ENCODE measurements at regions of chr1 and their contacts with region 1.

Region 1: DNA sequence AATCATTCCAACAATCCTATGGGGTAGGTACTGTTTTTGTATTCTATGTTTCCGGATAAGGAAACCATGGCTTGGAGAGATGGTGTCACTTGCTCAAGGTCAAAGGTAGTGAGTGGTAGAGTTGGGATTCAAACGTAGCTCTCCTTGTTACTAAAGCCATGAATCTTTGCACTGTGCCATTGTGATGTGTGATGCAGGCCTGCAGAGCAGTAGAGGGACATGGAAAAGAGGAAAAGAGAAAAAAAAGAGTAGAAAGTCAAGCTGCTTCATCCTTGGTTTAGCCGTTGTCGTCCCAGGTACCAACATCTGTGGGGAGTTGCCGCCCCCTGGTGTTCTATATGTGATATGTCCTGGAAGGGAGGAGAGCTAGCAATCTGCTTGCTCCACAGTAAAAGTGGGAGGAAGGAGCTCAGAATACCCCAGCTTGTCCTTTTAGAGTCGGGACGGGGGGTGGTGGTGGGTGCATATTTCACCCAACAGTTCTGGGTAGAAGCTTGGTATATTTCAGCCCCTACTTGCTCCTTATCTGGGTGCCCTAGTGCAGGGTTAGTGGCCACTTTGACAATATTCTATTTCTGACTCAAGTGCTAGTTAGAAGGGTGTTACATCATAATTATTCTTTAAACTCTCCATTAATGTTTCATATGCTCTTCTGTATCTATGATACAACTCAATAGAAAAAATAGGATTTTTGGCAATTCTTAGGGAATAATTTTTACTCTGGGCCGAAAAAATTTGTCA is 98.4 kb downstream of the EBNA1BP2 start:
- DNase-seq: peak; percentile 81
- H3K4me3 ChIP-seq: no peak overlapping the region; a peak in 1 of 4 replicates
- H3K27ac ChIP-seq: no peak overlapping the region
- H3K4me1 ChIP-seq: peaks cover 0 to 10% of the 10 kb centered on the region in 2 experiments; a peak in 1 of 4 replicates
- H3K27me3 ChIP-seq: no peaks in the 10 kb centered on the region
- CTCF ChIP-seq: peak; percentile 82
- EP300 ChIP-seq: no peak
- RAD21 ChIP-seq: peak; percentile 99

Region 2: DNA sequence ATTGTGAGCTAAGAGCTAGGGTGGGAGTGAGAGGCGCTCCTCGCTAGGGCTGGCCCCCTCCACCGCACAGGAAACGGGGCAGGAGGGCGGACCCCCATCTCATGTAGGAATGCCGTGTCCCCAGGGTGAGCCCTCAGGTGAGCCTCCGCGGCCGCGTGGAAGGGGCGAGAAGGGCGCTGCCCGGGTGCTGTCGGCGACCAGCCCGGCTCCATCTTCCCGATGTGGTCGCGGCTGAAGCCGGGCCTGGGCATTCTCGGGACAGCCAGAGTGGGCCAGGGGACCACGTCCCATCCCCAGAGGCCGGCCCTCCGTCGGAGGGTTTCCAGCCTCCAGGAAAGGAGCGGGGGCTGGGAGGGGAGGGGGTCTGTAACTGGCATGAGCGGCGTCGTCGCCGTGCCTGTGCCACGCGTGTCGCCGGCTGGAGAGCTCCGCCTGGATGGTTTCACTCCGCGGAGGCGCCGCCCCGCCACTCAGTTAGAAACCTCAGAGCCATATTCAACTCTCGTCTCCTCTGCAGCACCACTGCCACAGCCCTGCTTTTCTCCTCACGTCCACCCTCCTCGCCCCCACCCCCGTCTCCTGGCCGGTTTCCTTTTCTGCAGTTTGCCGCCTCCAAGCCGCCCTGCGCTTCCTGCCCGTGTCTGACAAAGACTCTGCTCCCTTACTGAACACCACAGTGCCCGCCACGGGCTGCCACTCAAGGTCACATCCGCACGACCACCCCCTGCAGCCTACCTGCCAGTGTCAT is 288.5 kb before region 1 on chr1 and contains the start of gene TMEM269:
- CTCF ChIA-PET with region 1: interaction called, 118 read pairs
- POLR2A ChIA-PET with region 1: no interaction called
- DNase-seq: peak; percentile 27
- H3K4me3 ChIP-seq: no peak within 1 kb of the TSS
- H3K27ac ChIP-seq: no peak within 1 kb of the TSS
- H3K4me1 ChIP-seq: peaks cover 0 to 6% of the 10 kb centered on the region in 2 experiments; a peak in 1 of 4 replicates
- H3K27me3 ChIP-seq: no peaks in the 10 kb centered on the region
- CTCF ChIP-seq: no peak
- EP300 ChIP-seq: no peak
- RAD21 ChIP-seq: no peak
- polyA plus RNA-seq, gene TMEM269: 0.05 and 0.08 TPM in 2 replicates

Region 3: DNA sequence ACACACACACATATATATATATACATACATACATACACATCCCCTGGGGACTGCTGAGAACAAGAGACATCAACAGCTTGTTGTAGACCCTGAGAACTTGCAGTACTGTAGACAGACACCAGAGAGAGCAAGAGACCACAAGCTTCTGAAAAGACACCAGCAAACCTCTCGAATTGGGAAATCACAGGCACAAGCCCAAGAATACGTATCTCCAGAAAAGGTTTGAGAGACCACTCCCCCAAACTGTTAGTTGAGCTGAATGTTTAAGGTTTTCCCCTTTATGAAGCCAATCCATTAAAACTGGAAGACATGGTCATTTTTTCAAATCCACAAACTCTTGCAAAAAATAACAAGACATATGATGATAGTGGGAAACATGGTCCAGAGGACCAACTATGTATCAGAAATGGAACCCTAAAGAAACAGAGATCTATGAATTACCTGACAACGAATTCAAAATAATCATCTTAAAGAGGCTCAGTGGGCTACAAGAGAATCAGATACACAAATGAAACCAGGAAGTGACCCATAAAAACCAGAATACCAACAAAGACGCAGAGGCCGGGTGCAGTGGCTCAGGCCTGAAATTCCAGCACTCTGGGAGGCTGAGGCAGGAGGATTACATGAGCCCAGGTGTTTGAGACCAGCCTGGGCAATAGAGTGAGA is 160.1 kb before region 1 on chr1:
- CTCF ChIA-PET with region 1: interaction called, 607 read pairs
- POLR2A ChIA-PET with region 1: interaction called, 12 read pairs
- DNase-seq: peak; percentile 67
- H3K4me3 ChIP-seq: no peak overlapping the region
- H3K27ac ChIP-seq: no peak overlapping the region
- H3K4me1 ChIP-seq: no peaks in the 10 kb centered on the region
- H3K27me3 ChIP-seq: no peaks in the 10 kb centered on the region
- CTCF ChIP-seq: peak; percentile 77
- EP300 ChIP-seq: no peak
- RAD21 ChIP-seq: peak; percentile 89

Region 4: DNA sequence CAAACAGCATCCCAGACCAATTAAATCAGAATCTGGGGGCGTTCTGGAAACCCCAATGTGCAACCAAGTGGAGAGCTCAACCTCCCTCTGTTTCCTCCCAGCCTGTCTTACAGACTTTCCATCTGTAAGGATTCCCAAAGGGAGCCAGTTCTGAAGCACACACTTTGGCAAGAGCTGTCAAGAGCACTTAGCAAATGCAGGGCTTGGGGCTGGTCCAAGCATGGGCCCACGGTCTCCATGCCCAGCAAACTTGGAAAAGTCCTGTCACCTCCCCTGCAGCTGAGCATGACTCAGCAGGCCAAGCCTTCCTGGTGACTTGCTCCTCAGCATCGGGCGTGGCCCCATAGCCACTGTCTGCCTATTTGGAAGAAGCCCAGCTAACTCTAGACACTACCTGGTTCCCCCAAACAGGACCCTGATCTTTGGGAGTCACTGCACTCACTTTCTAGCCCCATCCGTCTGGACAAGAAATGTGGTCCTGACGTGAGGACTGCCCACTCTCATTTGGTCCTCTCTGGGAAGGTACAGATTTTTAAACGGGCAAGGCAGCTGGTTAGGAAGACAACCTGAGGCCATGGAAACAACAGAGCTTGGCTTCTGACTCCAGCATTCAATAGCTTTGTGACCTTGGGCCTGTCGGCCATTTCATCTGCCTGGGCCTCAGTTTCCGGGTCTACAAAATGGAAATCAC is 131.9 kb before region 1 on chr1:
- CTCF ChIA-PET with region 1: interaction called, 50 read pairs
- POLR2A ChIA-PET with region 1: interaction called, 3 read pairs
- DNase-seq: no peak
- H3K4me3 ChIP-seq: no peak overlapping the region; a peak in 1 of 4 replicates
- H3K27ac ChIP-seq: peak overlapping the region; percentile 86 to 98
- H3K4me1 ChIP-seq: peaks cover 57 to 61% of the 10 kb centered on the region in 2 experiments; a peak in 3 of 4 replicates
- H3K27me3 ChIP-seq: no peaks in the 10 kb centered on the region
- CTCF ChIP-seq: no peak
- EP300 ChIP-seq: peak in 1 of 2 experiments; percentile 66; a peak in 1 of 4 replicates
- RAD21 ChIP-seq: no peak

Region 5: GRCh38 chr1:42979896-42980800 is 93.5 kb before region 1 on chr1:
- CTCF ChIA-PET with region 1: interaction called, 25 read pairs
- POLR2A ChIA-PET with region 1: interaction called, 3 read pairs
- DNase-seq: no peak
- H3K4me3 ChIP-seq: no peak overlapping the region
- H3K27ac ChIP-seq: peak overlapping the region in 1 of 2 experiments; percentile 98; a peak in 2 of 4 replicates
- H3K4me1 ChIP-seq: peaks cover 3 to 49% of the 10 kb centered on the region in 2 experiments; a peak in 3 of 4 replicates
- H3K27me3 ChIP-seq: no peaks in the 10 kb centered on the region
- CTCF ChIP-seq: no peak
- EP300 ChIP-seq: no peak
- RAD21 ChIP-seq: no peak

Region 6: GRCh38 chr1:43101061-43101460 is 27.4 kb after region 1 on chr1:
- CTCF ChIA-PET with region 1: interaction called, 10 read pairs
- POLR2A ChIA-PET with region 1: no interaction called
- DNase-seq: no peak
- H3K4me3 ChIP-seq: no peak overlapping the region
- H3K27ac ChIP-seq: no peak overlapping the region
- H3K4me1 ChIP-seq: no peaks in the 10 kb centered on the region
- H3K27me3 ChIP-seq: no peaks in the 10 kb centered on the region
- CTCF ChIP-seq: no peak
- EP300 ChIP-seq: no peak
- RAD21 ChIP-seq: no peak

Measured in SK-N-SH (cell line).